Activated CD4-positive, alpha-beta T cell treated with anti-CD3 and anti-CD28 coated beads for 36 hours (primary cell): ENCODE measurements at regions of chr17 and their contacts with region 1.

Region 1: GRCh38 chr17:62024894-62025293 is 40.2 kb downstream of the MED13 start:
- DNase-seq: no peak
- ATAC-seq: no peak
- H3K4me3 Mint-ChIP-seq: no peak overlapping the region
- H3K27ac Mint-ChIP-seq: no peak overlapping the region
- H3K4me1 Mint-ChIP-seq: peaks cover 15% of the 10 kb centered on the region
- H3K27me3 Mint-ChIP-seq: no peaks in the 10 kb centered on the region

Region 2: DNA sequence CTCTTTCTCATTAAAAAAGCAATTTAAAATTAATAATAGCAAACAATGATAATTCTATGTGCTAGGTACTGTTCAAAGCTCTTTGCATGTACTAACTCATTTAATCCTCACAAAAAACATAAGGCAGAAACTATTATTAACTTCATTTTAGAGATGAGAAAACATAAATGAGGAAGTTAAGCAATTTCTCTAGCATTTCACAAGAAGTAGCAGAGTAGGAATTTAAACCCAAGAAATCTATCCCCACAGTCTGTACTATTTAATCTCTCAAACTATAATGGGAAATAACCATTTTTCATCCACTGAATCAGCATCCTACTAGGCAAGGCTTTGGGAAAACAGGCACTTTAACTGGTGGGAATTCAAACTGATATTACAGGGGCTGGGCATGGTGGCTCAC is 54.9 kb before region 1 on chr17:
- CTCF ChIA-PET with region 1: no interaction called
- POLR2A ChIA-PET with region 1: no interaction called
- intact Hi-C with region 1: no loop called
- DNase-seq: no peak
- ATAC-seq: no peak
- H3K4me3 Mint-ChIP-seq: no peak overlapping the region
- H3K27ac Mint-ChIP-seq: no peak overlapping the region
- H3K4me1 Mint-ChIP-seq: peaks cover 8% of the 10 kb centered on the region
- H3K27me3 Mint-ChIP-seq: no peaks in the 10 kb centered on the region

Region 3: GRCh38 chr17:62009220-62009619 is 15.7 kb before region 1 on chr17:
- CTCF ChIA-PET with region 1: no interaction called
- POLR2A ChIA-PET with region 1: no interaction called
- intact Hi-C with region 1: loop called in 1 of 2 experiments (anchors 1 kb)
- DNase-seq: no peak
- ATAC-seq: no peak
- H3K4me3 Mint-ChIP-seq: no peak overlapping the region
- H3K27ac Mint-ChIP-seq: no peak overlapping the region
- H3K4me1 Mint-ChIP-seq: peaks cover 27% of the 10 kb centered on the region
- H3K27me3 Mint-ChIP-seq: no peaks in the 10 kb centered on the region

Region 4: DNA sequence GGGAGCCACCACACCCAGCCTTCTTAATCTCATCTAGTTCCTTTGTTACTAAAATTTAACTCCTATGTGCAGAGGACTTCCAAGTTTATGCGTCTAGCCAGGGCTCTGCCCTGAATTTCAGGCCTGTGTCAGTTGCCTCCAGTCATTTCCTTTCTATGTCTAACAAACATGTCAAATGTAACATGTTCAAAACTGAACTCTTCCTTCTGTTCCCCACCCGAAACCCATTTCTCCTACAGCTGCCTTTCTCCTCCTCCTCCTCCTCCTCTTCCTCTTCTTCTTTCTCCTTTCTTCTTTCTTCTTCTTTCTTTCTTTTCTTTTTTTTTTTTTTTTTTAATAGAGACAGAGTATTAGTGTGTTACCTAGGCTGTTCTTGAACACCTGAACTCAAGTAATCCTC is 514.9 kb after region 1 on chr17:
- CTCF ChIA-PET with region 1: no interaction called
- POLR2A ChIA-PET with region 1: no interaction called
- intact Hi-C with region 1: no loop called
- DNase-seq: no peak
- ATAC-seq: no peak
- H3K4me3 Mint-ChIP-seq: no peak overlapping the region
- H3K27ac Mint-ChIP-seq: no peak overlapping the region
- H3K4me1 Mint-ChIP-seq: peaks cover 3% of the 10 kb centered on the region
- H3K27me3 Mint-ChIP-seq: no peaks in the 10 kb centered on the region